IMR-90 (cell line): ENCODE measurements at regions of chr7 and their contacts with region 1.

Region 1: DNA sequence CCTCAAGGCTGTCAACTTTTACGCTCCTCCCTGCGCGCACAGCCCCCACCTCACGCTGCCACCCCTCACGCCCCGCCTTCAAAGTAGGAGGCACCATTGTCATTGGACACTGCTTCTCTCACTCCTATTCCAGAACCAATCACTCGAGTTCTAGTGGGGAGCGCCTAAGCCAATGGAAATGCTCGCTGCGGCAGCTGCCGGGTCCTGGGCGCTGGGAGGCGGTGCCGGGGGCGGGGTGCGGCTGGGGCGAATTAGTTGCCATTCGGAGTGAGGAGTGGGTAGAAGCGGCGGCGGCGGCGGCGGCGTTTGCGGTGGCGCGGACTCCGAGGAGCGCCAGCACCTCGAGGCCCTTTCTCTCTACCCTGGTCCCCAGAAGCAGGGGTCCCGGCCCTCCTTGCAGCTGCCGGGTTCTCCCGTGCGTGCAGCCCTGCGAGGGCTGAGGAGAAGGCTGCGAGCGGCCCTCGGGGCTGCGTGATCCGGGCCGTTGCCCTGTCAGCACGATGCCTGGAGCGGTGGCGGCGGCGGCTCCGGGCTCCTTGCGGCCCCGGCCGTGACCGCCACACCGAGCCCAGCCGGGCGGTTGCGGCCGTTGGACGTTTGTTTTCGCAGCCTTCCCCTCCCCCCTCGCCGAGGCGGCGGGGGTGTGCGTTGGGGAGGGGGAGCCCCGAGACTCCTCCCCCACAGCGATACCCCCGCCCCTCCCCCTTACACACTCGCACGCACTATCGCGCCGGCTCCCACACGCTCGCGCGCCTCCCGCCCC is at the start of gene GLCCI1:
- DNase-seq: peak; percentile 95
- ATAC-seq: peak; percentile 97
- H3K4me3 ChIP-seq: peak within 1 kb of the TSS; percentile 80
- H3K27ac ChIP-seq: peak within 1 kb of the TSS; percentile 80
- H3K4me1 ChIP-seq: peaks cover 4% of the 10 kb centered on the region; the same call in 1 of the 2 replicates
- H3K27me3 ChIP-seq: no peaks in the 10 kb centered on the region
- CTCF ChIP-seq: no peak
- POLR2A ChIP-seq: peak; percentile 67
- RAD21 ChIP-seq: peak; percentile 7; the same call in 1 of the 2 replicates
- total RNA-seq, gene GLCCI1: 4.1 and 7.8 TPM in 2 replicates

Region 2: GRCh38 chr7:7438851-7439250 is 529.9 kb before region 1 on chr7:
- CTCF ChIA-PET with region 1: no interaction called
- POLR2A ChIA-PET with region 1: no interaction called
- dilution Hi-C with region 1: no loop called
- in situ Hi-C with region 1: loop called (anchors 25 kb)
- intact Hi-C with region 1: no loop called
- DNase-seq: peak; percentile 99
- ATAC-seq: peak; percentile 97
- H3K4me3 ChIP-seq: no peak overlapping the region
- H3K27ac ChIP-seq: peak overlapping the region; percentile 78
- H3K4me1 ChIP-seq: peaks cover 8% of the 10 kb centered on the region
- H3K27me3 ChIP-seq: no peaks in the 10 kb centered on the region
- CTCF ChIP-seq: no peak
- POLR2A ChIP-seq: no peak
- RAD21 ChIP-seq: no peak

Region 3: GRCh38 chr7:7640221-7641128 is 328.2 kb before region 1 on chr7 and contains the start of gene UMAD1:
- CTCF ChIA-PET with region 1: no interaction called
- POLR2A ChIA-PET with region 1: no interaction called
- dilution Hi-C with region 1: no loop called
- in situ Hi-C with region 1: no loop called
- intact Hi-C with region 1: loop called (anchors 2 kb)
- DNase-seq: peak; percentile 98
- ATAC-seq: peak; percentile 97
- H3K4me3 ChIP-seq: peak within 1 kb of the TSS; percentile 78
- H3K27ac ChIP-seq: peak within 1 kb of the TSS; percentile 58
- H3K4me1 ChIP-seq: no peaks in the 10 kb centered on the region
- H3K27me3 ChIP-seq: no peaks in the 10 kb centered on the region
- CTCF ChIP-seq: no peak
- POLR2A ChIP-seq: peak; percentile 79; the same call in 1 of the 2 replicates
- RAD21 ChIP-seq: no peak
- total RNA-seq, gene UMAD1: 5.2 and 9.2 TPM in 2 replicates

Region 4: GRCh38 chr7:7681179-7681935 is 287.4 kb before region 1 on chr7:
- CTCF ChIA-PET with region 1: interaction called, 4 read pairs
- POLR2A ChIA-PET with region 1: no interaction called
- dilution Hi-C with region 1: no loop called
- in situ Hi-C with region 1: loop called (anchors 10 kb)
- intact Hi-C with region 1: loop called (anchors 5 kb)
- DNase-seq: peak; percentile 61
- ATAC-seq: peak; percentile 89
- H3K4me3 ChIP-seq: no peak overlapping the region
- H3K27ac ChIP-seq: no peak overlapping the region
- H3K4me1 ChIP-seq: no peaks in the 10 kb centered on the region
- H3K27me3 ChIP-seq: no peaks in the 10 kb centered on the region
- CTCF ChIP-seq: peak; percentile 76
- POLR2A ChIP-seq: no peak
- RAD21 ChIP-seq: peak; percentile 78

Region 5: DNA sequence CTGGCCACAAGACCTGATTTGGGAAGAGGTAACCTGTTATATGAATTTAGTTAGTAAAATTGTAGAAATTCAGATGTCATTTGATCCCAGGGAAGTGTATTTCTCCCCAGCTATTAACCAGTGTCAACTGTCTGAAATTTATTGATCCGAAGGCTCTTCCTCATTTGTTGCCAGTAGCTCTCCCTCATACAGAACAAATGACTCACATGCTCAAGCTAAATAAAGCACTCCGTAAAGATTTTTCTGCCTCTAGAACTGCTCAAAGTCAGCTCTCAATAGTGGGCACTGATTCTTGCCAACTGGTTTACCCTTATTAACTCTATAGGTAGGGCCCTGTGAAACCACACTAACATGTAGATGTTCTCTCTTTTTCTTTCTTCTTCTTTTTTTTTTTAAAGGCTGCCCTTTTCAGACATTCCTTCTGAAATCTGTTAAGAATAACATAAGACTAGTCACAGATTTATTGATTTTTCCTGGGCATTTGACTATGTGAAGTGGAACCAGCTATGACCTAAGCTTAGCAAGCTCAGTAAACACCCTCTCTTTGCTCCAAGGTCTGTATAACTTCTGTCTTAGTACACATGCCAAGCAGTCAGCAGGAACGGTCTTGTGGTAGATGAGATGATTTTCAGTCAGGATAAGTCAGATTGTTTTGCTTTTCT is 272.1 kb before region 1 on chr7:
- CTCF ChIA-PET with region 1: no interaction called
- POLR2A ChIA-PET with region 1: no interaction called
- dilution Hi-C with region 1: no loop called
- in situ Hi-C with region 1: no loop called
- intact Hi-C with region 1: loop called (anchors 5 kb)
- DNase-seq: peak; percentile 51
- ATAC-seq: peak; percentile 53; the same call in 1 of the 2 replicates
- H3K4me3 ChIP-seq: no peak overlapping the region
- H3K27ac ChIP-seq: no peak overlapping the region
- H3K4me1 ChIP-seq: peaks cover 4% of the 10 kb centered on the region; the same call in 1 of the 2 replicates
- H3K27me3 ChIP-seq: no peaks in the 10 kb centered on the region
- CTCF ChIP-seq: no peak
- POLR2A ChIP-seq: no peak
- RAD21 ChIP-seq: no peak

Region 6: GRCh38 chr7:7789551-7789988 is 179.2 kb before region 1 on chr7:
- CTCF ChIA-PET with region 1: no interaction called
- POLR2A ChIA-PET with region 1: no interaction called
- dilution Hi-C with region 1: no loop called
- in situ Hi-C with region 1: no loop called
- intact Hi-C with region 1: no loop called
- DNase-seq: no peak
- ATAC-seq: no peak
- H3K4me3 ChIP-seq: no peak overlapping the region
- H3K27ac ChIP-seq: no peak overlapping the region
- H3K4me1 ChIP-seq: peaks cover 6% of the 10 kb centered on the region
- H3K27me3 ChIP-seq: no peaks in the 10 kb centered on the region
- CTCF ChIP-seq: no peak
- POLR2A ChIP-seq: no peak
- RAD21 ChIP-seq: no peak

Region 7: GRCh38 chr7:7858559-7858958 is 110.2 kb before region 1 on chr7:
- CTCF ChIA-PET with region 1: no interaction called
- POLR2A ChIA-PET with region 1: no interaction called
- dilution Hi-C with region 1: no loop called
- in situ Hi-C with region 1: no loop called
- intact Hi-C with region 1: loop called (anchors 2 kb)
- DNase-seq: no peak
- ATAC-seq: no peak
- H3K4me3 ChIP-seq: no peak overlapping the region
- H3K27ac ChIP-seq: no peak overlapping the region
- H3K4me1 ChIP-seq: no peaks in the 10 kb centered on the region
- H3K27me3 ChIP-seq: no peaks in the 10 kb centered on the region
- CTCF ChIP-seq: no peak
- POLR2A ChIP-seq: no peak
- RAD21 ChIP-seq: no peak